Activated CD8-positive, alpha-beta T cell treated with anti-CD3 and anti-CD28 coated beads, Interleukin-2, amount 10 ng/mL, durations not matched to agents 7 days and 5 days (primary cell): ENCODE measurements at regions of chr19 and their contacts with region 1.

Region 1: GRCh38 chr19:7098701-7099596 is 29.4 kb downstream of the ZNF557 start:
- DNase-seq: peak; percentile 91
- ATAC-seq: peak; percentile 94
- H3K4me3 Mint-ChIP-seq: peak overlapping the region; percentile 83
- H3K27ac Mint-ChIP-seq: peak overlapping the region; percentile 91
- H3K4me1 Mint-ChIP-seq: peaks cover 28% of the 10 kb centered on the region
- H3K27me3 Mint-ChIP-seq: peaks cover 3% of the 10 kb centered on the region

Region 2: DNA sequence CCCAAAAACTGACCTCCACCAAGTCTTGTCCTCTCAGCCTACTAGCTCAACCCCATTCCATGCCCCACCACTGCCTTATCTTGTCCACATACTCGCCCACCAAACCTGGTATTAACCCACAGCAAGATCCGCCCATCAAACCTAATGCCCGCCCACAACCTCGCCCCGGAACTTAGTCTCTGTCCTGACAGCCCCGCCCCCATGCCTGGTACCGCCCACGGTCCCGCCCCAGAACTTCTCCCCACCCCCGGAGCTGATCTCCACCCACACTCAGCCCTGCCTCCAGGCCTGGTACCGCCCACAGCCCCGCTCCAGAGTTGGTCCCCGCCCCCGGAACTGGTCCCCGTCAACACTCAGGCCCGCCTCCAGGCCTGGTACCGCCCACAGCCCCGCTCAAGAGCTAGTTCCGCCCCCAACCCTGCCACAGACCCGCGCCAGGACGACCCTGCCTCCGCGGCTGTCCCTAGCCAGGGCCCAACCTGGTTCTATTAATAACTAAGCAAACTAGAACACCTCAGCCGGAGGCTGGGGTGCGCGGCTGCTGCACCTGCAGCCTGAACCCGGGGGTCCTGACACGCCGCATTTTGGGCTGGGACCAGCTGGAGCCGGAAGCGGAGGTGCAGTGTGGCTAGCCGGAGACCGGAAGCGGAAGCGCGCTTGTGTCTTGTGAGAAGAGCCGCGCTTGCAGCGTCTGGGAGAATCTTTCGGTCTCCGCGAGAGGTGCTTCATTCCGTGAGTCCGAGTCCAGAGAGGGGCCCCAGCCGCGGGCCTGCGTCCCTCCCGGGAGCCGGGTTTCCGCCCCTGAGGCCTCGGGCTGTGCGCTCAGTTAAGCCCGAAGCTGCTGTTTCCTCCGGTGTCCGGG is 29.7 kb before region 1 on chr19 and contains the start of gene ZNF557:
- CTCF ChIA-PET with region 1: interaction called, 6 read pairs
- POLR2A ChIA-PET with region 1: interaction called, 23 read pairs
- DNase-seq: peak; percentile 99
- ATAC-seq: peak; percentile 96
- H3K4me3 Mint-ChIP-seq: peak within 1 kb of the TSS; percentile 92
- H3K27ac Mint-ChIP-seq: peak within 1 kb of the TSS; percentile 97
- H3K4me1 Mint-ChIP-seq: peaks cover 18% of the 10 kb centered on the region
- H3K27me3 Mint-ChIP-seq: no peaks in the 10 kb centered on the region
- total RNA-seq, gene ZNF557: 16.5 to 16.7 TPM

Region 3: DNA sequence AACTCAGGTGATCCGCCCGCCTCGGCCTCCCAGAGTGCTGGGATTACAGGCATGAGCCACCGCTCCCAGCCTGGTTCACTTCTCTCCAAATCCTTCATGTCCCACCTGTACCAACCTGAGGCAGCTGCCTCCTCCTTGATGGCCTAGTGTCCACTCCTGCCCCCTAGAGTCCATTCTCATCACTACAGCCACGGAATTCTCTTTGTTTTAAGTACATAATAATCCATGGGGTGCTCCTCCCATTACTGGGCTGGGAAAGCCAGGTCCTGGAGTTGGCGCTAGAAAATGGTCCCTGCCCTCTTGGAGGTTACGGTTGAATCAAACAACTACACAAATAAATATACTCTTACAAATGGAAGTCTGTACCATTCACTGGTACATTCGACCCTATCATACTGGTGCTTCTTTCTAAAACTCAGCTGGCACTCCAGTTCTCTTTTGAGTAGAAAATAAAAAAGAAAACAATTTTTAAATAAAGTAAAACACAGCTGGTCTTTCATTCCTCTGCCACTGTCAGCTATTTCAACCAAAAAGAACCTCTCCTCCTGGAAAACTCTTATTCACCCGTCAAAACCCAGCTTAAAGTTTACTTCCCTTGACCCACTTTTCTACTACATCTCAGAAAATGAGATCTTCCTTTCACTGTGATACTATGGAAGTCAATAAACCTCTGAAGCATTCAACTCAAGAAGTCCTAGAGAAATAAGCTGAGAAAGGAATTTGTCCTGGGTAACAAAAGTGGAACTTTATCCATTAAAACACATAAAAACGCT is 227.3 kb after region 1 on chr19:
- CTCF ChIA-PET with region 1: interaction called, 10 read pairs
- POLR2A ChIA-PET with region 1: interaction called, 3 read pairs
- DNase-seq: peak; percentile 56
- ATAC-seq: no peak
- H3K4me3 Mint-ChIP-seq: no peak overlapping the region
- H3K27ac Mint-ChIP-seq: no peak overlapping the region
- H3K4me1 Mint-ChIP-seq: no peaks in the 10 kb centered on the region
- H3K27me3 Mint-ChIP-seq: peaks cover 2% of the 10 kb centered on the region

Region 4: GRCh38 chr19:7340959-7341837 is 242.2 kb after region 1 on chr19:
- CTCF ChIA-PET with region 1: interaction called, 19 read pairs
- POLR2A ChIA-PET with region 1: interaction called, 5 read pairs
- DNase-seq: peak; percentile 88
- ATAC-seq: peak; percentile 24
- H3K4me3 Mint-ChIP-seq: no peak overlapping the region
- H3K27ac Mint-ChIP-seq: peak overlapping the region; percentile 61
- H3K4me1 Mint-ChIP-seq: peaks cover 53% of the 10 kb centered on the region
- H3K27me3 Mint-ChIP-seq: no peaks in the 10 kb centered on the region

Region 5: GRCh38 chr19:7348587-7349230 is 249.8 kb after region 1 on chr19 and contains the start of gene ARHGEF18:
- CTCF ChIA-PET with region 1: interaction called, 13 read pairs
- POLR2A ChIA-PET with region 1: interaction called, 3 read pairs
- DNase-seq: peak; percentile 74
- ATAC-seq: peak; percentile 70
- H3K4me3 Mint-ChIP-seq: peak within 1 kb of the TSS; percentile 92
- H3K27ac Mint-ChIP-seq: peak within 1 kb of the TSS; percentile 95
- H3K4me1 Mint-ChIP-seq: peaks cover 64% of the 10 kb centered on the region
- H3K27me3 Mint-ChIP-seq: no peaks in the 10 kb centered on the region
- total RNA-seq, gene ARHGEF18: 34.0 to 40.5 TPM